AG04449 (cell line): ENCODE measurements at regions of chr1 and their contacts with region 1.

Region 1: DNA sequence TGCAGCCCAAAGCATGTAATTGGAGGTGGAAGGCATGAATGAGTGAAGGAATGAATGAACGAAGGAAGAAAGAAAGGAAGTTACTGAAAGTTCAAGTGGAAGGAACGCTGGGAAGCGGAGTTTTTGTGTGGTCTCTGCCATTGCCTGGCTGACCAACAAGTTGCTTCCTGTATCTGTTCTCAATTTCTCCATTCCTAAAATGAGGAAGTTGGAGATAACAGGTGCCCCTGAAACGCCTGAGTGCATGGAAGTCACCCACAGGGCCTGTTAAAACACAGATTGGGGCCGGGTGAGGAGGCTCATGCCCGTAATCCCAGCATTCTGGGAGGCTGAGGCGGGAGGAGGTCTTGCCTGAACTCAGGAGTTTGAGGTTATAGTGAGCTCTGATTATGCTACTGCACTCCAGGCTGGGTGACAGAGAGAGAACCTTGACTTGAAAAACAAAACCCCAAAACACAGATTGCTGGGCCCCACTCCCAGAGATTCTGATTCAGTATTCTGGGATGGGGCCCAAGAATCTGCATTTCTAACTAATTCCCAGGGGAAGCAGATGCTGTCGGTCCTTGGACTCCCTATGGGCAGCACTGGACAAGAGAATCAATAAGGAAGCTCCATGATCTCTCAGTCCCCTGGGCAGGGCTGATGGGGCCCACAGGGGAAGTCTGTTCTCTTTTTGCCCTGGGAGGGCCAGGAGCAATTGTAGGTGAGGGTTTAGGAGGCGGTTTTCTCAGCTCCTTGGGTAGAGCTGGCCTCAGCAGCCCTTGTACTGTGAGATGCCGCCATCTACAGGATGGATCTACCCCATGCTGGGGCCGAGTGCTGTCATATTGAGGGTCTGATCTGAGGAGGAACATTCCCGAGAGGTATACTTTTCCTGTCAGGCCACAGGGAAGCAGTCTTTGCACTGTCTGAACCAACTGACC is 3.3 kb upstream of the CNR2 start:
- DNase-seq: no peak
- H3K4me3 ChIP-seq: no peak overlapping the region
- CTCF ChIP-seq: peak; percentile 66

Region 2: GRCh38 chr1:23777979-23778814 is 138.3 kb before region 1 on chr1 and contains the start of gene PITHD1:
- CTCF ChIA-PET with region 1: interaction called, 33 read pairs
- POLR2A ChIA-PET with region 1: no interaction called
- DNase-seq: no peak
- H3K4me3 ChIP-seq: peak within 1 kb of the TSS; percentile 81
- CTCF ChIP-seq: no peak

Region 3: GRCh38 chr1:23809751-23810171 is 106.7 kb before region 1 on chr1:
- CTCF ChIA-PET with region 1: interaction called, 30 read pairs
- POLR2A ChIA-PET with region 1: no interaction called
- DNase-seq: no peak
- H3K4me3 ChIP-seq: no peak overlapping the region
- CTCF ChIP-seq: peak; percentile 84

Region 4: GRCh38 chr1:23862640-23863039 is 53.8 kb before region 1 on chr1:
- CTCF ChIA-PET with region 1: no interaction called
- POLR2A ChIA-PET with region 1: no interaction called
- DNase-seq: no peak
- H3K4me3 ChIP-seq: no peak overlapping the region
- CTCF ChIP-seq: no peak

Region 5: GRCh38 chr1:24022581-24023361 is 106.3 kb after region 1 on chr1:
- CTCF ChIA-PET with region 1: no interaction called
- POLR2A ChIA-PET with region 1: no interaction called
- DNase-seq: peak; percentile 65
- H3K4me3 ChIP-seq: no peak overlapping the region; the same call in 1 of the 2 replicates
- CTCF ChIP-seq: no peak

Region 6: GRCh38 chr1:24036088-24036487 is 119.6 kb after region 1 on chr1:
- CTCF ChIA-PET with region 1: no interaction called
- POLR2A ChIA-PET with region 1: no interaction called
- DNase-seq: no peak
- H3K4me3 ChIP-seq: no peak overlapping the region
- CTCF ChIP-seq: no peak

Region 7: DNA sequence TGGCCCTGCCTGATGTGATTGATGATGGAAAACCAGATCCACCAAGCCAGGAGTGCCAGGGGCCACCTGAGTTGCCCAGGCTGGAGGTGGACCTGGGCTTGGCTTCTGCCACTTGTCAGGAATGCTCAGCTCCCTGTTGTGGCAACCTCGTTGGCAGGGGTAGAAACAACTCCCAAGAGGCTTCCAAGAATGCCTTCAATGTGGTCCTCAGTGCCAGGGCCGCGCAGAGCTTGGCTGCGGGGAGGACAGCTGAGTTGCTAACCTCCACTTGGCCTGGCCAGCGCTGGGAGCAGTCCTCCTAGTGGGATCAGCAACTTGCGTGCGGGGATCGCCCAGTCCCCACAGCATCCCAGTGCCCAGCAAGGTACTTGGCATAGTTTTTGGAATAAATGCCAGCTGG is 186.5 kb after region 1 on chr1:
- CTCF ChIA-PET with region 1: no interaction called
- POLR2A ChIA-PET with region 1: no interaction called
- DNase-seq: no peak
- H3K4me3 ChIP-seq: no peak overlapping the region
- CTCF ChIP-seq: no peak